ENCODE measurements at regions of chr15 and their contacts with region 1.

Region 1: DNA sequence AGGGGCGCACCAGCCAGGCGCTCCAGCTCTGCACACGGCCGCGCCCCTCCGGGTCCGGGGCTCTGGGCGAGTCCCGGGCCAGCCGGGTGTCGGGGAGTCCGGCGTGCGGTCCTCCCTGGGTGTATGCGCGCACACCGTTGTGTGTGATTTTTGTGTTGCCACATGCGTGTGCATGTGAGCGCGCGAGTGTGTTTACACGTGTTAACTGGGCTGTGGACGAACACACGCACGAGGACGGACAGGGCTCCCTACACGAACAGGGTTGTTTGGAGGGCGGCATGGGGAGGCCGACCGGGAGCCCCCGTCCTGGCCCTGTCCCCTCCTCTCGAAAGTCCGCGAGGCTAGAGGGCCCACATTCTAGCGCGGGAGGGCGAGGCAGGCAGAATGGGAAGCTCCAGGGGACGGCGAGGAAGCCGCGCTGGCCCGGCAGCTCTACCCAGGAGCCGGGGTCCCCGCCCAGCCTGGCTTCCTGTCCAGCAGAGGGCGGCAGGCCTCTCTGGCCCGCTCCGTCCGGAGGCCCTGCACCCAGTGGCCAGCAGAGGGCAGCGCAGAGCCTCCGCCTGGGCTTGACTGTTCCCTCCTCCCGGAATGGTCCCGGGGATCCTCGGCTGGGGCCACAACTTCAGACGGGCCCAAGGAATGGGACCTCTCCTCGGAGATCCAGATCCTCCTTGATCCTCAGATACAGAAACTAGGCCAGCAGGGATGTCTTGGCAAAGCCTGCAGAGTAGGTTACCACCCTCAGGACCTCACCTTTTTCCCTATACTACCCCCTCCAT is 611 bp upstream of the LINGO1 start:
- DNase-seq: peak; percentile 73
- ATAC-seq: peak; percentile 86
- H3K4me3 Mint-ChIP-seq: peak overlapping the region; percentile 38
- H3K27ac Mint-ChIP-seq: no peak overlapping the region
- H3K4me1 Mint-ChIP-seq: peaks cover 10% of the 10 kb centered on the region
- H3K27me3 Mint-ChIP-seq: peaks cover 45% of the 10 kb centered on the region

Region 2: DNA sequence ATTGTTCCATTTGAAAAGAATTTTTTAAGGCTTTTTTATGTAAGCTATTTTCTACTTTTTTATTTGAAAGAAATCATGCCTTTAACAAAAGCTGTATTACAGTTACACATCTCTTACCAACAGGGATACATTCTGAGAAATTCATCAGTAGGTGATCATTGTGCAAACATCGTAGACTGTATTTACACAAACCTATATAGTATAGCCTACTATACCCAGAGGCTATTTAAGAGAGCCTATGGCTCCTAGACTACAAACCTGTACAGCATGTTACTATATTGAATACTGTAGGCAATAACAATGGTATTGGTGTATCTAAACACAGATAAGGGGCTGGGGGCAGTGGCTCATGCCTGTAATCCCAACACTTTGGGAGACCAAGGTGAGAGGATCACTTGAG is 256.6 kb before region 1 on chr15:
- CTCF ChIA-PET with region 1: no interaction called
- POLR2A ChIA-PET with region 1: no interaction called
- DNase-seq: no peak
- ATAC-seq: no peak
- H3K4me3 Mint-ChIP-seq: no peak overlapping the region
- H3K27ac Mint-ChIP-seq: no peak overlapping the region
- H3K4me1 Mint-ChIP-seq: peaks cover 5% of the 10 kb centered on the region
- H3K27me3 Mint-ChIP-seq: no peaks in the 10 kb centered on the region

Region 3: GRCh38 chr15:77646104-77646694 is 12.9 kb after region 1 on chr15:
- CTCF ChIA-PET with region 1: interaction called, 11 read pairs
- POLR2A ChIA-PET with region 1: no interaction called
- DNase-seq: no peak
- ATAC-seq: no peak
- H3K4me3 Mint-ChIP-seq: no peak overlapping the region
- H3K27ac Mint-ChIP-seq: no peak overlapping the region
- H3K4me1 Mint-ChIP-seq: no peaks in the 10 kb centered on the region
- H3K27me3 Mint-ChIP-seq: peaks cover 9% of the 10 kb centered on the region

Region 4: DNA sequence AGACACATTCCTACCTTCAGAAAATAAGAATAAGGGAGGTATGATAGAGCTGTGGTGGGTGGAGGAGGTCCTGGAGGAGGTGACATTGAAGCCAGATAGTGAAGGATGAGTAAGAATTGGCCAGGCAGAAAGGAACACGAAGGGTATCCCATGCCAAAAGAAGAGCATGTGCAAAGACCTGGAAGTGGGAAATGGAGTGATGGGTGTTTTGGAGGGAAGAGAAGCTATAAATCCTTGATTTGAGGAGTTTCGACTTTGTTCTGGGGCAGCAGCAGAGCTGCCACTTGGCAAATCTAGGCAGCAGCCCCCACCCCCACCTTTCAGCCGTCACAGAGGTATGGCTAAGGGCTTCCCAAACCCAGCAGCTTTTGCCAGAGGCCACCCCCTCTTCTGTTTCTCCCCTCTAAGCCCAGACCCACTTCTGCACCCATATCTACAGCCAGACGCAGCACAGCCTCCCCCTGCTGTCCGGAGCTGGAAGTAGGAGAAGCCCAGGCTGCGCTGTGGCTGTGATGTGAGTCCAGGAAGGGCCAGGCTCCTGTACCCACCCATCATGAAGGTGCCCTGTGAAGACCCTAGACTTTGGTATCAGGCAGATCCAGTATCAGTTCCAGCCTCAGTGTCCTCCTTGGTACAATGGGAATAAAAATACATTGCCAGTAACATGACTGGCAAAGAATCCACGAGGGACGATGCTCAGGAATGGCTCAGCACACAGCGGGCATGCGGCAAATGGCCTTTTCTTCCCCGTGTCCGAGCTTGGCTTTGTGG is 188.1 kb after region 1 on chr15:
- CTCF ChIA-PET with region 1: interaction called, 20 read pairs
- POLR2A ChIA-PET with region 1: no interaction called
- DNase-seq: peak; percentile 55
- ATAC-seq: peak; percentile 70
- H3K4me3 Mint-ChIP-seq: no peak overlapping the region
- H3K27ac Mint-ChIP-seq: no peak overlapping the region
- H3K4me1 Mint-ChIP-seq: peaks cover 6% of the 10 kb centered on the region
- H3K27me3 Mint-ChIP-seq: peaks cover 45% of the 10 kb centered on the region

Measured in activated CD8-positive, alpha-beta T cell treated with anti-CD3 and anti-CD28 coated beads, Interleukin-2, amount 10 ng/mL, durations not matched to agents 7 days and 5 days (primary cell).